ENCODE measurements at regions of chr18 and their contacts with region 1.

Region 1: DNA sequence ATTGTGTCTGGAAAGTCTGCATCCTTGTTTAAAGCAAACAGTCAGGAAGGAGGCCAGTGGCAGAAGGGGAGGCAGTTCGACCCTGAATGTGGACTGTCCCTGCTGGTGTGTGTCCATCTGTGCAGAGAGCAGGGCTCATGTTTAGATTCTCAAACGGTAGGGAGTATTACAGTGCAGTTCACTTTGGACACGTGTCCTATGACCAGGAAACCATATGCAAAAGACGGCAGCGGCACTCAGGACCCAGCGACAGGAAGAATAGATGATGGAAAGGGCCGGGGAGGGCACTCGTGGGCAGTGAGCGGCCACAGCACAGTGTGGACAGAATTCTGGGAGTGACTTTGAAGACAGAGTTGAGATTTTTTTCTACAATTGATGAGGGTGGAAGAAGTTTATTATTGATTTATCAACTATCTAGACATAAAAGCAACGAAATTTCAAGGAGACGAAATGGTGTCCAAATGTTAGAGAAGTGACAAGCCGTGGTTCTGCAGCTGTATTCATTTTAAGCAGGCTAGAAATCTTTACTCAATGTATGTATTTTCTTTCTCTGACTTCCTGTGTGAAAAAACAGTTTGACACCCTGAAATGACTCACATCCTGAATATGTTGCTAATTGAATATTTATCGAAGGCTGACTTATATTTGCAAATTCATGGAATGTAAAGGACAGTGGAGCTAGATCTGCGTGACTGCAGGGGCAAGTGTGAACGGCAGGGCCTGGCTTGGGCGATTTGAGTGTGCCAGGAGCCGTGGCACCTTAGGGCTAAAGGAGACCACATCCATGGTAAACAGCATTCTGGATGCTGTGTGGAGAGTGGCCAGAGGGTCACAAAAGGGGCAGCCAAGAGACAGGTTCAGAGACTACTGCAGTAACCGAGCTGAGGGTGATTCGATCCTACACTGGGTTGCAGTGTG is 214.2 kb downstream of the PTGR3 start:
- DNase-seq: peak; percentile 41 to 64
- ATAC-seq: peak; percentile 70 to 85 (median 80)
- H3K4me3 ChIP-seq: peak overlapping the region; percentile 33
- H3K4me3 Mint-ChIP-seq: peak overlapping the region; percentile 84
- H3K27ac ChIP-seq: peak overlapping the region; percentile 84
- H3K27ac Mint-ChIP-seq: peak overlapping the region; percentile 86 to 95
- H3K4me1 ChIP-seq: peaks cover 29% of the 10 kb centered on the region
- H3K4me1 Mint-ChIP-seq: peaks cover 60 to 70% of the 10 kb centered on the region in 2 donors
- H3K27me3 ChIP-seq: no peaks in the 10 kb centered on the region
- H3K27me3 Mint-ChIP-seq: no peaks in the 10 kb centered on the region
- CTCF ChIP-seq: no peak

Region 2: GRCh38 chr18:74579496-74580065 is 415.2 kb before region 1 on chr18:
- intact Hi-C with region 1: no loop called
- DNase-seq: no peak
- ATAC-seq: no peak
- H3K4me3 ChIP-seq: no peak overlapping the region
- H3K4me3 Mint-ChIP-seq: no peak overlapping the region
- H3K27ac ChIP-seq: no peak overlapping the region
- H3K27ac Mint-ChIP-seq: no peak overlapping the region
- H3K4me1 ChIP-seq: no peaks in the 10 kb centered on the region
- H3K4me1 Mint-ChIP-seq: no peaks in the 10 kb centered on the region
- H3K27me3 ChIP-seq: no peaks in the 10 kb centered on the region
- H3K27me3 Mint-ChIP-seq: peaks cover 17 to 21% of the 10 kb centered on the region in 2 donors
- CTCF ChIP-seq: no peak

Region 3: GRCh38 chr18:74597662-74598349 is 397.0 kb before region 1 on chr18 and contains the start of gene ZNF407:
- intact Hi-C with region 1: loop called (anchors 5 kb)
- DNase-seq: peak; percentile 85 to 94
- ATAC-seq: peak; percentile 72 to 88 (median 78)
- H3K4me3 ChIP-seq: peak within 1 kb of the TSS; percentile 95
- H3K4me3 Mint-ChIP-seq: peak within 1 kb of the TSS; percentile 93
- H3K27ac ChIP-seq: peak within 1 kb of the TSS; percentile 96
- H3K27ac Mint-ChIP-seq: peak within 1 kb of the TSS; percentile 94 to 95
- H3K4me1 ChIP-seq: peaks cover 14% of the 10 kb centered on the region
- H3K4me1 Mint-ChIP-seq: peaks cover 58 to 65% of the 10 kb centered on the region in 2 donors
- H3K27me3 ChIP-seq: no peaks in the 10 kb centered on the region
- H3K27me3 Mint-ChIP-seq: no peaks in the 10 kb centered on the region
- CTCF ChIP-seq: no peak
- total RNA-seq, gene ZNF407: 28.4 to 36.7 (median 36.3) TPM

Region 4: DNA sequence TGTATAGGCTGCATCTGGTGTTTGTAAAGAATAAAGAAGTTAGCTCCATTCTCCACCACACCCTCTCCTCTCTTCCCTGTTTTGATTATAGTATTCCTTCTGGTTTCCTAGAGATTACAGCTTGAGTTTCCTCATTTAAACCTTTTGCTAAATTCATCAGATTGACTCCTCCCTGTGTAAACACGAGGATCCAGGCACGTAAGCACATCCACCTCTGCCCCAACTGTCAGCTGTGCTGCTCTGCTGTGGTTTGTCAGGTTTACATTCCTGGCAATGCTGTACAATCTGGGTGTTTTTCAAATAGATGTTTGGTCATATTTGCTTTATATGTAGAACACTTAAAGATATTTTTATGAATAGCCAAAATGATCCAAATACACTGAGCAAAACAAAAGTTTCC is 88.6 kb before region 1 on chr18:
- intact Hi-C with region 1: no loop called
- DNase-seq: no peak
- ATAC-seq: no peak
- H3K4me3 ChIP-seq: no peak overlapping the region
- H3K4me3 Mint-ChIP-seq: no peak overlapping the region
- H3K27ac ChIP-seq: no peak overlapping the region
- H3K27ac Mint-ChIP-seq: peak overlapping the region in 1 of 2 donors; percentile 41
- H3K4me1 ChIP-seq: no peaks in the 10 kb centered on the region
- H3K4me1 Mint-ChIP-seq: peaks cover 2 to 5% of the 10 kb centered on the region in 2 donors
- H3K27me3 ChIP-seq: no peaks in the 10 kb centered on the region
- H3K27me3 Mint-ChIP-seq: no peaks in the 10 kb centered on the region
- CTCF ChIP-seq: no peak

Region 5: DNA sequence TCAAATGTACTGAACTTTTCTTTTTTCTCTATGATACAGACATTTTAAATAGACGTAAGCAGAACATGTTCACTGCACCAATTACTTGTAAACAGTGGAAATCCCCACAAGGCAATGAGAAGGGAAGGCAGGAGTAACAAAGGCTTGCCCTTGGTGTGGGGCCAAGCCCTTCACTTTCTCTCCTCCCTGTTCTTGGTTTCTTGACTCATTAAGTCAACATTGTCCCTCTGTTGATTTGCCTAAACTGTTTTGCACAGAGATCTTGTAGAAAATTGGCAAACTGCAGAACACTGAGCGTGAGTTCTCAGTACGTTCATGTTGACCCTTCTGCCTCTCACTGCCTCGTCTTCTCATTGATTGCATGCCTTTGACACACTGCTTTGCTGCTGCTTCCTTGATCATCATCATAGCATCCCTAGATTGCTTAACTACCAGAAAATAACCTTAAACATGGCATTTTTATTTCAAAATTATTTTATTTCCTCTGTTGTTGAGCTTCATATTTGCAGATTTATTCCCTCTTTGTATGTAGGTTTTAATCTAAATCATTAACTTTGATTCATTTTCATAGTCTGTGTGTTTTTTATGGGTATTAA is 43.5 kb before region 1 on chr18:
- intact Hi-C with region 1: loop called (anchors 5 kb)
- DNase-seq: peak in 1 of 2 donors; percentile 73
- ATAC-seq: peak; percentile 46 to 64 (median 58)
- H3K4me3 ChIP-seq: no peak overlapping the region
- H3K4me3 Mint-ChIP-seq: peak overlapping the region; percentile 56
- H3K27ac ChIP-seq: no peak overlapping the region
- H3K27ac Mint-ChIP-seq: peak overlapping the region; percentile 57 to 63
- H3K4me1 ChIP-seq: peaks cover 9% of the 10 kb centered on the region
- H3K4me1 Mint-ChIP-seq: peaks cover 25 to 30% of the 10 kb centered on the region in 2 donors
- H3K27me3 ChIP-seq: no peaks in the 10 kb centered on the region
- H3K27me3 Mint-ChIP-seq: no peaks in the 10 kb centered on the region
- CTCF ChIP-seq: no peak

Region 6: GRCh38 chr18:75216212-75216910 is 221.6 kb after region 1 on chr18:
- intact Hi-C with region 1: loop called (anchors 5 kb)
- DNase-seq: peak; percentile 22 to 79
- ATAC-seq: peak; percentile 74 to 85 (median 80)
- H3K4me3 ChIP-seq: peak overlapping the region; percentile 4
- H3K4me3 Mint-ChIP-seq: peak overlapping the region; percentile 78
- H3K27ac ChIP-seq: peak overlapping the region; percentile 95
- H3K27ac Mint-ChIP-seq: peak overlapping the region; percentile 89 to 95
- H3K4me1 ChIP-seq: peaks cover 40% of the 10 kb centered on the region
- H3K4me1 Mint-ChIP-seq: peaks cover 77 to 78% of the 10 kb centered on the region in 2 donors
- H3K27me3 ChIP-seq: no peaks in the 10 kb centered on the region
- H3K27me3 Mint-ChIP-seq: no peaks in the 10 kb centered on the region
- CTCF ChIP-seq: no peak

Region 7: DNA sequence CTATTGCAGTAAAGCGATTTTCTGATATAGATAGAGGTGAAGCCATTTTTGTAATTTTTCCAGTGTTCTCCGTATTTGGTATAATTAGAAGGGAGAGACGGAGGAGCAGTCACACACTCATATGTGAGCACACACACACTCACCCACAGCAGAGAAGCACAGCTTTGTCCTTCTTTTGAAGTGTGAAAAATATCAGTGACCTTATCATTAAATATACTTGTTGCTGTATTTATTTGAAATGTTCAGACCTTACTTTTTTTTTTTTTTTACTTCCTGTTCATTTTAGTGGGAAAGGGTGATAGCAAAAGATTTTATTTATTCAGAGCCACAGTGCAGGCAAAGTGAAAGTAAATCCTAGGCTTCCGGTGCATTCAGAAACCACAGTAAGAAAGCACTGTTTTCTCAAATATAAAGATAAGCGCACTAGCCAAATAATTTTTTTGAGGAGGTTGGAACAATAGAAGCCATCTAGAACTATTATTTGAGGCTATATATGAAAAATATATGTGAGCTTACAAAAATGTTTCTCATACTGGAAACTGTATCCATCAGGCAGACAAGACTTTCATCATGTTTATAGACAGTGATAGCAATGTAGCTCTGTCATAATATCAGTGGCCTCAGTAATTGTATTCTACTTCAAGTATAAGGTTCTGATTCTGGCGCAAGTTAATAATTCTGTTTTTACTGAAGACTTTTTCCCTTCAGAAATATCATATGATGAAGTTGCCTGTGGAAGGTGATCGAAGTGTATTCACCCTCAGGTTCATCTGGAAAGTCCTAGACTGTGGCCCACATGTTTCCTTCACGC is 253.1 kb after region 1 on chr18:
- intact Hi-C with region 1: loop called (anchors 5 kb)
- DNase-seq: peak in 1 of 2 donors; percentile 69
- ATAC-seq: peak; percentile 22 to 42 (median 35)
- H3K4me3 ChIP-seq: peak overlapping the region; percentile 35
- H3K4me3 Mint-ChIP-seq: peak overlapping the region; percentile 92
- H3K27ac ChIP-seq: peak overlapping the region; percentile 71
- H3K27ac Mint-ChIP-seq: peak overlapping the region; percentile 92 to 98
- H3K4me1 ChIP-seq: peaks cover 47% of the 10 kb centered on the region
- H3K4me1 Mint-ChIP-seq: peaks cover 57 to 78% of the 10 kb centered on the region in 2 donors
- H3K27me3 ChIP-seq: no peaks in the 10 kb centered on the region
- H3K27me3 Mint-ChIP-seq: no peaks in the 10 kb centered on the region
- CTCF ChIP-seq: no peak